ENCODE measurements at regions of chr7 and their contacts with region 1.

Region 1: GRCh38 chr7:128398016-128398840 is 11.6 kb downstream of the IMPDH1 start:
- DNase-seq: no peak
- H3K4me3 ChIP-seq: no peak overlapping the region
- H3K27me3 ChIP-seq: no peaks in the 10 kb centered on the region
- CTCF ChIP-seq: peak; percentile 94

Region 2: DNA sequence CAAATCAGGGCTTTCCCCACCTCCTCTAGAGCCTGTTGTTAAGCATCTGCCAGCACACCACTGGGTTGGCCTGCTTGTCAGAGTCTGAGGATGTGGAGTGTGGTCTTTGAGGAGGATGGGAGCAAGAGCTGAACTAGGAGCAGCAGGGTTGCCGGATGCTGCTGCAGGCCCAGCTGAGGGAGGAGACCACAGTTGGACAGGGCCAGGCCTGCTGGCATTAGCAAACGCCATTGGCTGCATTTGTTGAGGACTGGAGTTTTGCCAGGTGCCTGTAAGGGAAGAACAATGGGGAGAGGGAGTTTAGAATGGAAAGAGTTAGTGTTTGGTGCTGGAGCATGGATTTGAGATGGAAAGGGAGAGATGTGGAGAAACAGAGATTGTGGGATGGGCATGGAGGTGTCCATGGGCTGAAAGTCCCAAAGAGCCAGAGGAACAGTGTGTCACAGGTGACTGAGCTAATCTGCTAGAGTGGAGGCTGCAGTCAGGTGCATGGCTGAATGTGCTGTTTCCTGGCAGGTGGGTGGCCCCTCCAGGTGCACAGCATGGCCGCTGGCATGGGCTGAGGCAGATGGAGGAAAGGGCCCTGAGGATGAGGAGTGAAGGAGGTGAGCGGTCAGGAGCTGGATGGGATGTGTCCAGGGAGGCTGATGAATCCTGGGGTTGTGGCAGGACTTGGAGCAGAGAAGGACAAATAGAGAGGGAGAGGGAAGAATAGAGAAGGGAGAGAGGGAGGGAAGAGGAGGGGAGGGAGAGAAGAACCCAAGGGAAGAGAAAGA is 116.4 kb before region 1 on chr7:
- CTCF ChIA-PET with region 1: no interaction called
- POLR2A ChIA-PET with region 1: no interaction called
- DNase-seq: no peak
- H3K4me3 ChIP-seq: no peak overlapping the region
- H3K27me3 ChIP-seq: no peaks in the 10 kb centered on the region; the same call in 1 of the 2 replicates
- CTCF ChIP-seq: no peak

Region 3: DNA sequence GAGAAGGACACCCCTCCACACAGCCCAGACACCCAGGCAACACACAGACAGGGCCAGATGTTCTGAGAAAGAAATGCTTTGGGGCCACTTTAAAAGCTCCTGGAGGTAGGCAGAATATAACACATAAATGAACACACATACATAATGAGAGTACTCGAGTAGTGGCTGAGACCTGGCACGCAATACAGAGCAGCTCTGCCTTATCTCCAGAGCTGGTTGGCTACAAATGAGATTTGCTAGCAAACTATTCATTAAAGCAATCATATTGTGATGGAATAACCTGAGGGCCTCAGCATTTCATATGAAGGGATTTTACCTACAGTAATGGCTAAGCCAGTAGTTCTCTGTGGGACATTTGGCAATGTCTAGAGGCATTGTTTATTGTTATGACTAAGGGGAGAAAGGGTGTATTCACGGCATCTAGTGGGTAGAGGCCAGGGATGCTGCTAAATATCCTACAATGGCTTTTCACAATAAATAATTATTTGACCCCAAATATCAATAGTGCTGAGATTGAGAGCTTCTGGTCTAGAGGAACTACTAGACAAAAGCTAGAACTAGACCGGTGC is 17.1 kb after region 1 on chr7:
- CTCF ChIA-PET with region 1: interaction called, 31 read pairs
- POLR2A ChIA-PET with region 1: no interaction called
- DNase-seq: no peak
- H3K4me3 ChIP-seq: no peak overlapping the region
- H3K27me3 ChIP-seq: peaks cover 14% of the 10 kb centered on the region
- CTCF ChIP-seq: no peak

Region 4: DNA sequence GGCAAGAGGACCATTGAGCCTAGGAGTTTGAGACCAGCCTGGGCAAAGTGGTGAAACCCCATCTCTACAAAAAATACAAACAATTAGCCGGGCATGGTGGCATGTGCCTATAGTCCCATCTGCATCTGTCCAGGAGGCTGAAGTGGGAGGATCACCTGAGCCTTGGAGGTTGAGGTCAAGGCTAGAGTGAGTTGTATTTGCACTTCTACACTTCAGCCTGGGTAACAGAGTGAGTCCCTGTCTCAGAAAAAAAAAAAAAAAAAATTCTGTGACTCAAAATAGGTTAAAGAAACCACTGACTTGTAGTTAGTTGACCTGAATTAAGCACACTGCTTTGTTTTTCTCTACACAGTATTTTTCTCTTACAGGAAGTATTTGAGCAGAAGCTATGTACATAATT is 152.7 kb after region 1 on chr7:
- CTCF ChIA-PET with region 1: no interaction called
- POLR2A ChIA-PET with region 1: no interaction called
- DNase-seq: no peak
- H3K4me3 ChIP-seq: no peak overlapping the region
- H3K27me3 ChIP-seq: no peaks in the 10 kb centered on the region
- CTCF ChIP-seq: no peak

Region 5: GRCh38 chr7:129072479-129073011 is 674.3 kb after region 1 on chr7:
- CTCF ChIA-PET with region 1: no interaction called
- POLR2A ChIA-PET with region 1: no interaction called
- DNase-seq: no peak
- H3K4me3 ChIP-seq: no peak overlapping the region
- H3K27me3 ChIP-seq: 0 out of 2 replicates have a peak, but pooled peaks cover 2% of the 10 kb centered on the region
- CTCF ChIP-seq: no peak